Endothelial cell of umbilical vein (primary cell): ENCODE measurements at regions of chr4 and their contacts with region 1.

Region 1: GRCh38 chr4:143441678-143442077 is 71.8 kb upstream of the SMARCA5 start:
- DNase-seq: no peak
- H3K4me3 ChIP-seq: no peak overlapping the region
- H3K27ac ChIP-seq: no peak overlapping the region
- H3K4me1 ChIP-seq: peaks cover 15% of the 10 kb centered on the region
- H3K27me3 ChIP-seq: no peaks in the 10 kb centered on the region
- CTCF ChIP-seq: no peak
- POLR2A ChIP-seq: no peak

Region 2: GRCh38 chr4:142913461-142914030 is 528.1 kb before region 1 on chr4:
- CTCF ChIA-PET with region 1: no interaction called
- POLR2A ChIA-PET with region 1: no interaction called
- dilution Hi-C with region 1: no loop called
- intact Hi-C with region 1: no loop called
- DNase-seq: no peak
- H3K4me3 ChIP-seq: no peak overlapping the region
- H3K27ac ChIP-seq: no peak overlapping the region
- H3K4me1 ChIP-seq: no peaks in the 10 kb centered on the region
- H3K27me3 ChIP-seq: no peaks in the 10 kb centered on the region
- CTCF ChIP-seq: no peak
- POLR2A ChIP-seq: no peak

Region 3: GRCh38 chr4:143351774-143352451 is 89.8 kb before region 1 on chr4:
- CTCF ChIA-PET with region 1: no interaction called
- POLR2A ChIA-PET with region 1: no interaction called
- dilution Hi-C with region 1: no loop called
- intact Hi-C with region 1: no loop called
- DNase-seq: peak; percentile 92
- H3K4me3 ChIP-seq: no peak overlapping the region
- H3K27ac ChIP-seq: peak overlapping the region; percentile 51
- H3K4me1 ChIP-seq: peaks cover 17% of the 10 kb centered on the region
- H3K27me3 ChIP-seq: no peaks in the 10 kb centered on the region
- CTCF ChIP-seq: no peak
- POLR2A ChIP-seq: no peak

Region 4: DNA sequence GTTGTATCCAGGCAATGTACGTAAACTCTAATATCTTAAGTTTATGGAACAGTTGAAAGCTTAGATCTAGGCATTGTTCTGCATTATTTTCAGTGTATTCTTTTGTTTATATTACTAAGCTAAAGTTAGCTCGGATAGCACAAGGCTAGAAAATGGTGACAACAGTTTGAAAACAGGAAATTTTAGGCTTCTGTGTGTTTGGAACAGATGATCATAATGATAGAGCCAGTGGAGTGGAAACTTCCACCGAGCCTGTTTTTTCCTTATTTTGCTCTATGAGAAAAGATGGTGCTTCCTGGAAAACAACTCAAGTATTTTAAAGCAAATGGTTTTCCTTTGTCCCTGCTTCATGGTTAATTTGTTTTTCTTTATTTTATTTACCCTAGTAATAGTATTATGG is 34.2 kb before region 1 on chr4:
- CTCF ChIA-PET with region 1: interaction called, 3 read pairs
- POLR2A ChIA-PET with region 1: interaction called, 4 read pairs
- dilution Hi-C with region 1: no loop called
- intact Hi-C with region 1: loop called (anchors 1 kb)
- DNase-seq: peak; percentile 95
- H3K4me3 ChIP-seq: no peak overlapping the region
- H3K27ac ChIP-seq: peak overlapping the region; percentile 34
- H3K4me1 ChIP-seq: peaks cover 49% of the 10 kb centered on the region
- H3K27me3 ChIP-seq: no peaks in the 10 kb centered on the region
- CTCF ChIP-seq: no peak
- POLR2A ChIP-seq: no peak

Region 5: GRCh38 chr4:143558823-143559756 is 117.4 kb after region 1 on chr4:
- CTCF ChIA-PET with region 1: no interaction called
- POLR2A ChIA-PET with region 1: no interaction called
- dilution Hi-C with region 1: no loop called
- intact Hi-C with region 1: no loop called
- DNase-seq: peak; percentile 85
- H3K4me3 ChIP-seq: peak overlapping the region; percentile 39 to 70 (median 43)
- H3K27ac ChIP-seq: peak overlapping the region; percentile 25
- H3K4me1 ChIP-seq: peaks cover 4% of the 10 kb centered on the region
- H3K27me3 ChIP-seq: no peaks in the 10 kb centered on the region
- CTCF ChIP-seq: peak; percentile 47 to 69
- POLR2A ChIP-seq: peak; percentile 42

Region 6: DNA sequence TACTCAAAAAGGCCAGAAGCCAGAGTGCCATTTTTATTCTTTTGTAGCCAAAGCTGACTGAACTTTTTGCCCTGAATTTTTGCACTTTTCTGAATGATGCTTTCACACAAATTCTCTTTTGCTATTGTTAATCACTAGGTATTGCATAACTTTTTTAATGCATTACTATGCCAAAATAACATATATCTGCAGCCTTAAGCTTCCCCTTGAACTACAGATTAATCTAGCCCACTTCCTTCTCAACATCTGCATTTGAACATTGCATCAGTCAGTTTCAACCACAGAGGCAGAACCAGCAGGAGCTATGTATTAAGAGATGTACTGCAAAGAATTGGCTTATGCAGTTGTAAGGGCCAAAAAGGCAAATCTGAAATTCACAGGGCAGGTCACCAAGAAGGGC is 896.5 kb after region 1 on chr4:
- CTCF ChIA-PET with region 1: no interaction called
- POLR2A ChIA-PET with region 1: no interaction called
- dilution Hi-C with region 1: no loop called
- intact Hi-C with region 1: no loop called
- DNase-seq: no peak
- H3K4me3 ChIP-seq: no peak overlapping the region
- H3K27ac ChIP-seq: no peak overlapping the region
- H3K4me1 ChIP-seq: no peaks in the 10 kb centered on the region
- H3K27me3 ChIP-seq: no peaks in the 10 kb centered on the region
- CTCF ChIP-seq: no peak
- POLR2A ChIP-seq: no peak